ENCODE measurements at regions of chr6 and their contacts with region 1.

Region 1: GRCh38 chr6:24855395-24856245 is 56.9 kb upstream of the ARMH2 start:
- DNase-seq: peak; percentile 78
- ATAC-seq: peak; percentile 89
- H3K4me3 ChIP-seq: no peak overlapping the region
- H3K27ac ChIP-seq: no peak overlapping the region
- H3K4me1 ChIP-seq: no peaks in the 10 kb centered on the region; the same call in 1 of the 2 replicates
- H3K27me3 ChIP-seq: no peaks in the 10 kb centered on the region
- CTCF ChIP-seq: peak; percentile 97
- POLR2A ChIP-seq: peak; percentile 45; the same call in 1 of the 2 replicates
- RAD21 ChIP-seq: peak; percentile 98

Region 2: GRCh38 chr6:24699521-24700359 is 155.9 kb before region 1 on chr6:
- CTCF ChIA-PET with region 1: no interaction called
- POLR2A ChIA-PET with region 1: no interaction called
- dilution Hi-C with region 1: no loop called
- in situ Hi-C with region 1: no loop called
- intact Hi-C with region 1: no loop called
- DNase-seq: no peak
- ATAC-seq: no peak
- H3K4me3 ChIP-seq: no peak overlapping the region
- H3K27ac ChIP-seq: no peak overlapping the region
- H3K4me1 ChIP-seq: no peaks in the 10 kb centered on the region
- H3K27me3 ChIP-seq: no peaks in the 10 kb centered on the region
- CTCF ChIP-seq: no peak
- POLR2A ChIP-seq: no peak
- RAD21 ChIP-seq: no peak

Region 3: DNA sequence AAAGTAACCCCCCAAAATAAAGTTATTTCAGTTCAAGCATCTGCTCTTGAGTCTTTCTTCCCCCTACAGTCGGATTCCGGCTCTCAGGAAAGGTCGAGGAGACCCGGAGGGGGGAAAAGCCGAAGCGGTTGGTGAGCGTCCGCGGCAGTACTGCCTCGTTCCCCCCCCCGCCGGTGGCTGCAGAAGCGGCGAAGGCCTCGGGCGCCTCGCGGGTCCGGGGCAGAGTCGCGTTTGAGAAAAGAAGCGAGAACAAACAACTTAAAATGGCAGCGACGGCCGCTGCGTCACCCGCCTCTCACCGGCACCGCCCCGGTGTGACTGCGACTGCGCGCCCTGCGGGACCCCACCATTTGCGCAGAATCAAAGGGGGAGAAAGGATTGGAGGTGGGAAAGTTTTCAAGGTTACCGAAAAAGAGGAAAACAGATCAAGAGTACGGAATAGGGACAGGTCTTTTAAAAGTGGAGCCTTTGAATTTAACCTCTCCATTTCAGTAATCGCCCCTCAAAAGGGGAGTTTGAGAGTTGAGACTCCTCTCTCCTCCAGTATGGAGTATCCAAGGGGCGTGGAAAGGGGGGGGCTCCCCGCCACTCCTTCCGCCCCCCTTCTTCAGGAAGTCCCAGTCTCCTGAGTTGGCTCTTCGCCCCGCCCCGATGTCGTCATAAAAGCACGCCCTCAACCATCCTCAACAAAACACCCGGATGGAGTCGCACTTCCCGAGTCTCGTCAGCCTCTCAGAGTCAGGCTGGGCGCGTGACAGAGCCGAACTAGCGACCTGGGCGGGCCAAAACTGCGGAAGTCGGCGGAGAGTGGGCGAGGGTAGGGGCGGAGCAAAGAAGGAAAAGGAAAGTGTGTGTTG is 134.8 kb before region 1 on chr6:
- CTCF ChIA-PET with region 1: no interaction called
- POLR2A ChIA-PET with region 1: no interaction called
- dilution Hi-C with region 1: no loop called
- in situ Hi-C with region 1: no loop called
- intact Hi-C with region 1: loop called (anchors 10 kb)
- DNase-seq: peak; percentile 100
- ATAC-seq: peak; percentile 92
- H3K4me3 ChIP-seq: peak overlapping the region; percentile 98
- H3K27ac ChIP-seq: peak overlapping the region; percentile 98
- H3K4me1 ChIP-seq: no peaks in the 10 kb centered on the region
- H3K27me3 ChIP-seq: no peaks in the 10 kb centered on the region
- CTCF ChIP-seq: no peak
- POLR2A ChIP-seq: peak; percentile 99
- RAD21 ChIP-seq: no peak

Region 4: DNA sequence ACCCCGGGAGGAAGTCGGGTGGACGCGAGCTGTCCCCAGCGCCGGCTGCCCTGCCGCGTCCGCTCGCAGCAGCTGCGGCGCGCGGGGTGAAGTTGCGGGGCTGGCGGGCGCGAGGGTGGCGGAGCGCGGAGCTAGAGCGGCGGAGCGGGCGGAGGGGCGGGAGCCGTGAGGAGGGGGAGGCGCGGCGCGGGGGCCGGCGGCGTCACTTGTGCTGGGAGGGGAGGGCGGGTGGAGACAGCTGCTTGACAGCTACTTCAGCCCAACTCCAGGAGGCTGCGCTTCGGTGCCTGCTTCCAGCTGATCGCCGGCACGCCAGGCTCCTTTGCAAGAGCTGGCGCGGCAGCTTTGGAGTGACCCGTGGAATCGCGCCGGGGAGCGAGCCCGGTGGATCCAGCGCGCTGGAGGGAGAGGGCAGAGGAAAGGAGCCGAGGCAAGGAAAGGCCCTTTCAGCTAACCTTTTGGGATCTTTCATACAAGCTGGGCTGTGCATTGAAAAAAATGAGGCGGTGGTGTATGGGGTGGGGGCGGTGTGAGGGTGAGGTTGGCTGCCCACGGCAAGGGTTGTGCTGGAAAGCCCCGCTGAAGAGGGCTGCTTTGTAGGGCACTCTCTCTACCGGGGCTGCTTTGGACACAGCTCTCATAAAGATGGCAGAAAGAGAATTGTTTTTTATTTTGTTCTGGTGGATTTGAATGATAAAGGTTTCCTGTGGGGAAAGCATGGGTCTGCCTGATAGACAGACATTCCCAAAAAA is 55.5 kb after region 1 on chr6:
- CTCF ChIA-PET with region 1: interaction called, 5 read pairs
- POLR2A ChIA-PET with region 1: no interaction called
- dilution Hi-C with region 1: no loop called
- in situ Hi-C with region 1: no loop called
- intact Hi-C with region 1: loop called (anchors 2 kb)
- DNase-seq: peak; percentile 65
- ATAC-seq: peak; percentile 76
- H3K4me3 ChIP-seq: peak overlapping the region; percentile 75
- H3K27ac ChIP-seq: peak overlapping the region; percentile 73
- H3K4me1 ChIP-seq: peaks cover 22% of the 10 kb centered on the region
- H3K27me3 ChIP-seq: peaks cover 5% of the 10 kb centered on the region
- CTCF ChIP-seq: no peak
- POLR2A ChIP-seq: no peak
- RAD21 ChIP-seq: no peak

Region 5: GRCh38 chr6:25017932-25018567 is 162.4 kb after region 1 on chr6:
- CTCF ChIA-PET with region 1: no interaction called
- POLR2A ChIA-PET with region 1: no interaction called
- dilution Hi-C with region 1: no loop called
- in situ Hi-C with region 1: no loop called
- intact Hi-C with region 1: loop called (anchors 1 kb)
- DNase-seq: peak; percentile 65
- ATAC-seq: 0 out of 2 replicates have a peak, but pooled peaks have one; percentile 22
- H3K4me3 ChIP-seq: no peak overlapping the region
- H3K27ac ChIP-seq: no peak overlapping the region
- H3K4me1 ChIP-seq: peaks cover 12% of the 10 kb centered on the region
- H3K27me3 ChIP-seq: no peaks in the 10 kb centered on the region
- CTCF ChIP-seq: peak; percentile 67
- POLR2A ChIP-seq: no peak
- RAD21 ChIP-seq: peak; percentile 82

Region 6: GRCh38 chr6:25070547-25071366 is 215.1 kb after region 1 on chr6:
- CTCF ChIA-PET with region 1: interaction called, 7 read pairs
- POLR2A ChIA-PET with region 1: no interaction called
- dilution Hi-C with region 1: no loop called
- in situ Hi-C with region 1: no loop called
- intact Hi-C with region 1: loop called (anchors 1 kb)
- DNase-seq: peak; percentile 81
- ATAC-seq: peak; percentile 99
- H3K4me3 ChIP-seq: no peak overlapping the region
- H3K27ac ChIP-seq: peak overlapping the region; percentile 0; the same call in 1 of the 2 replicates
- H3K4me1 ChIP-seq: peaks cover 5% of the 10 kb centered on the region
- H3K27me3 ChIP-seq: no peaks in the 10 kb centered on the region
- CTCF ChIP-seq: peak; percentile 94
- POLR2A ChIP-seq: peak; percentile 59
- RAD21 ChIP-seq: peak; percentile 98

Region 7: DNA sequence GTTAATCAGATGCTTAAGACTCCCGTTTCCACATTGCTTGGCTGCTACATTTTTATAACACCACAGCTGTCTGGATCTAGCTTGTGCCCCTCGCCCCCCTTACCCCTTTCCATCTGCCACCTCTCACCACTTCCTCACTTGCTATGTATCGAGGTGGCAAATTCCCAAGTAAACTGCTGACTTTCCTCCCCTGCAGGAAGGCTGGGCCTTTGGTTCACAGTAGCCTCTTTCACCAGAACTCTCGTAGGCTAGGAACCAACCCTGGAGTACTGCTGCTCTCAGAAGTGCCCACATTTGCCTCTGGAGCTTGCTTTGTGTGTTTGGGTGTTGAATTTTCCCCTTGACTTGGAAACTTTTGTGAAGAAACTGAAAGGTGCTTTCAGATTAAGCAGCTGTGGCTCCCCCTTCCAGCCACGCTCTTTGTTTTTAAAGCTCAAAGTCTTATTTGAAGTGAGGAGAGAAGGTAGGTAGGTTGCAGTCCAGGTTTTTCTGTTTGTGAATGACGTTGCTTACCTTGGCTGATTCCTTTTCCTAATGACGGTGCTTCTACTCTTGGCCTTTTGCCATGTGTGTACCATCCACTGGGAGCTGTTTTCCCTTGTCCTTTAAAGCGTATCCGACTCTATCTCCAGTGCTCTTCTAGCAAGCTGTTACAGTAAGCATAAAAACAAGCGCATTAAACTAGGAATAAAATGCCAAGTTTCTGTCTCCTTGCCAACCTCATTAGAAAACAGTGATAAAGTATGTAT is 514.0 kb after region 1 on chr6:
- CTCF ChIA-PET with region 1: no interaction called
- POLR2A ChIA-PET with region 1: no interaction called
- dilution Hi-C with region 1: no loop called
- in situ Hi-C with region 1: no loop called
- intact Hi-C with region 1: no loop called
- DNase-seq: no peak
- ATAC-seq: no peak
- H3K4me3 ChIP-seq: no peak overlapping the region
- H3K27ac ChIP-seq: no peak overlapping the region
- H3K4me1 ChIP-seq: no peaks in the 10 kb centered on the region; the same call in 1 of the 2 replicates
- H3K27me3 ChIP-seq: no peaks in the 10 kb centered on the region
- CTCF ChIP-seq: no peak
- POLR2A ChIP-seq: no peak
- RAD21 ChIP-seq: no peak

Measured in IMR-90 (cell line).